GM12878 (cell line): ENCODE measurements at regions of chr3 and their contacts with region 1.

Region 1: GRCh38 chr3:16906682-16907081 is 21.9 kb downstream of the PLCL2 start:
- DNase-seq: no peak
- ATAC-seq: peak; percentile 62
- H3K4me3 ChIP-seq: no peak overlapping the region
- H3K27ac ChIP-seq: peak overlapping the region; percentile 63
- H3K4me1 ChIP-seq: peaks cover 50% of the 10 kb centered on the region
- H3K27me3 ChIP-seq: no peaks in the 10 kb centered on the region
- CTCF ChIP-seq: no peak
- EP300 ChIP-seq: no peak
- POLR2A ChIP-seq: no peak
- RAD21 ChIP-seq: no peak

Region 2: DNA sequence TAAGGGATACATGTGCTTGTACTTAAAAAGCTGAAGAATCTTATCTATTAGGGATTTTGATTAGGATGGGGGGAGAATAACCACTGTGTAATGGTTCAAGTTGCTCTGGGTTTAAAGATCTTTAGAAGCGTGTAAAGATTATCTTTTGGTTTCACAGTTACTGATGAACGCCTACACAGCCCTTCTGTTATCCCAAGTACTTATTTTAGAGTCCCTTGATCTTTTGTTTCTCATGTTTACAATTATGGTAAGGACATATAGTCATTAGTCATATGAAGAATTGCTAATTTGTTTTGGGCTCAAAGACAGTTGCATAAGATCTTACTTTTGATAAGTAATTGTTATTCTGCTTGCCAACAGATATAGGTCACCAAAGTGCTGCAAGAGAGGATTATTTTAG is 138.2 kb after region 1 on chr3:
- CTCF ChIA-PET with region 1: no interaction called
- POLR2A ChIA-PET with region 1: no interaction called
- RAD21 ChIA-PET with region 1: no interaction called
- SMC1A ChIA-PET with region 1: interaction called, 4 read pairs
- in situ Hi-C with region 1: no loop called
- intact Hi-C with region 1: loop called (anchors 5 kb)
- DNase-seq: no peak
- ATAC-seq: peak; percentile 84
- H3K4me3 ChIP-seq: no peak overlapping the region
- H3K27ac ChIP-seq: peak overlapping the region; percentile 72
- H3K4me1 ChIP-seq: peaks cover 38% of the 10 kb centered on the region
- H3K27me3 ChIP-seq: no peaks in the 10 kb centered on the region
- CTCF ChIP-seq: no peak
- EP300 ChIP-seq: peak; percentile 85 to 87; a peak in 3 of 4 replicates
- POLR2A ChIP-seq: no peak
- RAD21 ChIP-seq: 0 out of 2 replicates have a peak, but pooled peaks have one; percentile 5